Mammary epithelial cell (primary cell): ENCODE measurements at regions of chr11 and their contacts with region 1.

Region 1: GRCh38 chr11:69949327-69949726 is 128.8 kb upstream of the ANO1 start:
- DNase-seq: peak; percentile 98
- H3K4me3 ChIP-seq: no peak overlapping the region
- H3K27ac ChIP-seq: peak overlapping the region; percentile 93
- H3K4me1 ChIP-seq: peaks cover 31% of the 10 kb centered on the region
- H3K27me3 ChIP-seq: no peaks in the 10 kb centered on the region
- CTCF ChIP-seq: no peak

Region 2: GRCh38 chr11:69427337-69427736 is 522.0 kb before region 1 on chr11:
- CTCF ChIA-PET with region 1: no interaction called
- dilution Hi-C with region 1: loop called (anchors 10 kb)
- in situ Hi-C with region 1: no loop called
- intact Hi-C with region 1: no loop called
- DNase-seq: no peak
- H3K4me3 ChIP-seq: no peak overlapping the region
- H3K27ac ChIP-seq: no peak overlapping the region
- H3K4me1 ChIP-seq: peaks cover 1% of the 10 kb centered on the region
- H3K27me3 ChIP-seq: no peaks in the 10 kb centered on the region
- CTCF ChIP-seq: no peak

Region 3: DNA sequence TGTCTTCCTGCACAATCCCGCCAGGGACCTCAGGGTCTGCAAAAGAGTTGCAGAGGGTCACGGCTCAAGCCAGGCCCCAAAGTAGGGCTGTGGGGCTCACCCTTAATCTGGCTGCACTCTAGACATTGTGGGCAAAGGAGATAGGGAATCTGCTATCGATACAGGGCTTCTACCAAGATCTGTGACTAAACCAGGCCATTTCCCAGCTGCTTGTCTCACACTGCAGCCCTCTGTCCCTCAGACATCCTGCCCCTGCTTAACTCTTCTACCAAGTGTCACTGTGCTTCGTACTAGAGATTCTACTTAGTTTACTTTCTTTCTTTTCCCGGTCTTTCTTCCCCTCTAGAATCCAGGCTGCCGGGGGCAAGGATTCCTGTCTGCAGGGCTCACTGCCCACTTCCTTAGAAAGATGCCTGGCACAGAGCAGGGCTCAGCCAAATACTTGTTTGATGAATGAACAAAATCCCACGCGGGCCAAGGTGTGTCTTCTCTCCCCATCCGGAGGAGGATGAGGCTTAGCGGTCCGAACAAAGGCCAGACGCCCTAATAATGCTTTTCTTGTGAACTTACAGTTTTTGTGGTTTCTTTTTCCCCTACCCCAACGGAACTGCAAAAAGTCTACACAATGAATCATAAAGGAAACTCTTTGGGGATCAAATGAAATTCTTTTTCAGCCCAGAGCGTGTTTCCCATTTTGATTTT is 67.5 kb after region 1 on chr11:
- CTCF ChIA-PET with region 1: no interaction called
- dilution Hi-C with region 1: no loop called
- in situ Hi-C with region 1: no loop called
- intact Hi-C with region 1: loop called (anchors 5 kb)
- DNase-seq: peak; percentile 98
- H3K4me3 ChIP-seq: no peak overlapping the region
- H3K27ac ChIP-seq: peak overlapping the region; percentile 83
- H3K4me1 ChIP-seq: peaks cover 53% of the 10 kb centered on the region
- H3K27me3 ChIP-seq: no peaks in the 10 kb centered on the region
- CTCF ChIP-seq: no peak

Region 4: GRCh38 chr11:70048279-70049027 is 99.1 kb after region 1 on chr11:
- CTCF ChIA-PET with region 1: no interaction called
- dilution Hi-C with region 1: no loop called
- in situ Hi-C with region 1: no loop called
- intact Hi-C with region 1: no loop called
- DNase-seq: no peak
- H3K4me3 ChIP-seq: no peak overlapping the region
- H3K27ac ChIP-seq: no peak overlapping the region
- H3K4me1 ChIP-seq: no peaks in the 10 kb centered on the region
- H3K27me3 ChIP-seq: no peaks in the 10 kb centered on the region
- CTCF ChIP-seq: peak; percentile 6 to 42

Region 5: DNA sequence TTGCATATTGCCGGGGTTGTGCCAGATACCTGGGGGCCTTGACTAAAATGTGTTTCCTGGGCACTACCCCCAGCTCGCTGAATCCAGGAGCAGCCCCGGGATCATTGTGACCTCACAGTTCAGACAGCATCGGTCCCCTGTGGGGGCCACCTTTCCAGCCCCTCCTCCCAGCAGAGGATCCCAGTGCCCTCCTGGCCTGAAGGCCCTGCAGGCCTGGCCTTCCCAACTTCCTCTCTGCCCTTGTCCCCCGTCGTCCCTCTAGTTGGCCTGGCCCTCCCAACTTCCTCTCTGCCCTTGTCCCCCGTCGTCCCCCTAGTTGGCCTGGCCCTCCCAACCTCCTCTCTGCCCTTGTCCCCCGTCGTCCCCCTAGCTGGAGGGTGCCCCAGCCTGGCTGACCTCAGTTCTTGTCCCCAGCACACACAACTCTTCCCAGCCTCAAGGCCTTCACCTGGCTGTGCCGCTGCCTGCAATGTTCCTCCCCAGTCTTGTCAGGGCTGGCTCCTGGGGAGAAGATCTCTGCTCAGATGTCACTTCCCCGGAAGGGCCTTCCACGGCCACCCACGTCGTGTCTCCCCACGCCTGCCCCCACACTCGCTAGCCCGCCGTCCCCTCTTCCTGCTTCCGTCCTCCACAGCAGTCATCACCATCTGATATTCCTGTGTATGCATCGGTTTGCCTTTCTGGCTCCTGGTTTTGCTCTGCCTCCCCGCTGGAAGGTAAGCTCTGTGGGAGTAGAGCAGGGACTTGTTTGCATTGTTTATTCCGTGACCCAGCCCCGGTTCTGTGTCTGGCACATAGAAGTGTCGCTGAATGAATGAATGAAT is 116.2 kb after region 1 on chr11:
- CTCF ChIA-PET with region 1: no interaction called
- dilution Hi-C with region 1: no loop called
- in situ Hi-C with region 1: no loop called
- intact Hi-C with region 1: loop called (anchors 5 kb)
- DNase-seq: no peak
- H3K4me3 ChIP-seq: no peak overlapping the region
- H3K27ac ChIP-seq: peak overlapping the region; percentile 87
- H3K4me1 ChIP-seq: peaks cover 60% of the 10 kb centered on the region
- H3K27me3 ChIP-seq: no peaks in the 10 kb centered on the region
- CTCF ChIP-seq: no peak

Region 6: GRCh38 chr11:70082829-70083228 is 133.5 kb after region 1 on chr11:
- CTCF ChIA-PET with region 1: interaction called, 3 read pairs
- dilution Hi-C with region 1: loop called (anchors 10 kb)
- in situ Hi-C with region 1: no loop called
- intact Hi-C with region 1: loop called (anchors 1 kb)
- DNase-seq: no peak
- H3K4me3 ChIP-seq: no peak overlapping the region
- H3K27ac ChIP-seq: no peak overlapping the region
- H3K4me1 ChIP-seq: peaks cover 49% of the 10 kb centered on the region
- H3K27me3 ChIP-seq: no peaks in the 10 kb centered on the region
- CTCF ChIP-seq: peak; percentile 37 to 51

Region 7: GRCh38 chr11:70128435-70128906 is 179.1 kb after region 1 on chr11:
- CTCF ChIA-PET with region 1: interaction called, 3 read pairs
- dilution Hi-C with region 1: no loop called
- in situ Hi-C with region 1: no loop called
- intact Hi-C with region 1: loop called (anchors 5 kb)
- DNase-seq: peak; percentile 60
- H3K4me3 ChIP-seq: no peak overlapping the region
- H3K27ac ChIP-seq: no peak overlapping the region
- H3K4me1 ChIP-seq: peaks cover 46% of the 10 kb centered on the region
- H3K27me3 ChIP-seq: no peaks in the 10 kb centered on the region
- CTCF ChIP-seq: peak in 1 of 2 donors; percentile 39

Region 8: DNA sequence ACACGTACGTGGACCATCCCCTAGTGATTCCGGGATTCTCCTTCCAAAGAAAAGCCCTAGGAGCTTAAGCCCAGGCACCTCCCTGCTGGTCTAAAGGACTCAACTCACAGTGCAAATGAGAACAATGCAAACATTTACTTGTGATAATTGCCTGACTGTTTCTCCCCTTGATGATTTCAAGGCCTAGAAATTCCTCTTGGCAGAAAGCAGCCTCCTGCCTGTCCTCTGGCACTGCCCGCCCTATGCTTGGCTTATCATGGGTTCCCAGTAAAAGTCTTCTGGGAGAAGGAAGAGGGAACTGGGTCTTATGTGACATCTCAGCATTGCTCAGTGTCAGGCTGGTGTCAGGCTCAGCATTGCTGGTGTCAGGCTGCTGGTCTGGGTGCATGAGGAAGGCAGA is 951.2 kb after region 1 on chr11:
- CTCF ChIA-PET with region 1: no interaction called
- dilution Hi-C with region 1: no loop called
- in situ Hi-C with region 1: no loop called
- intact Hi-C with region 1: no loop called
- DNase-seq: no peak
- H3K4me3 ChIP-seq: no peak overlapping the region
- H3K27ac ChIP-seq: no peak overlapping the region
- H3K4me1 ChIP-seq: no peaks in the 10 kb centered on the region
- H3K27me3 ChIP-seq: no peaks in the 10 kb centered on the region
- CTCF ChIP-seq: no peak